Head of caudate nucleus (tissue), 42 donors: ENCODE measurements at regions of chr1 and their contacts with region 1.

Region 1: GRCh38 chr1:67347688-67348472 is 40.2 kb downstream of the IL12RB2 start:
- DNase-seq: peak in 40 of 42 donors; percentile 6 to 78 (median 48)

Region 2: GRCh38 chr1:67239738-67240137 is 108.1 kb before region 1 on chr1:
- intact Hi-C with region 1: loop called (anchors 5 kb)
- DNase-seq: no peak

Region 3: DNA sequence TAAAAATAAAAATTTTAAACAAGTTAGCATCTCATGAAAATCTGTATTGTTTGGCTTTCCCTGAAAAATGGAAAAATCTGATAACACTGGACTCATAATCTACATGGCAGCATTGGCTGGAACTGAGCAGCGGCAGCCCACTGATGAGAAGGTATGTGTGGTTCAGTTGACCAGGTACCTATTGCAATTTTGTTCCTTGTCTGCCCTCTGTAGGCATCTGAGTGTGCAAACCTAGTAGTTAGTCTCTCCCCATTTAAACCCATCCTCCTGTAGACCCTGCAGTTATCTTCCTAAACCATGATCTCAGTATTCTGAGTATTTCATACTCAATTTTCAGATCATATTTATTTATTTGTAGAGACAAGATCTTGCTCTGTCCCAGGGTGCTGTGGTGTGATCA is 141.8 kb after region 1 on chr1:
- intact Hi-C with region 1: loop called (anchors 5 kb)
- DNase-seq: peak in 1 of 42 donors; percentile 38